ENCODE measurements at regions of chr11 and their contacts with region 1.

Region 1: GRCh38 chr11:86608251-86608799 is 64.1 kb downstream of the ME3 start:
- DNase-seq: peak; percentile 88
- H3K4me3 ChIP-seq: peak overlapping the region; percentile 36
- H3K27ac ChIP-seq: no peak overlapping the region
- H3K4me1 ChIP-seq: peaks cover 16% of the 10 kb centered on the region
- H3K27me3 ChIP-seq: no peaks in the 10 kb centered on the region

Region 2: DNA sequence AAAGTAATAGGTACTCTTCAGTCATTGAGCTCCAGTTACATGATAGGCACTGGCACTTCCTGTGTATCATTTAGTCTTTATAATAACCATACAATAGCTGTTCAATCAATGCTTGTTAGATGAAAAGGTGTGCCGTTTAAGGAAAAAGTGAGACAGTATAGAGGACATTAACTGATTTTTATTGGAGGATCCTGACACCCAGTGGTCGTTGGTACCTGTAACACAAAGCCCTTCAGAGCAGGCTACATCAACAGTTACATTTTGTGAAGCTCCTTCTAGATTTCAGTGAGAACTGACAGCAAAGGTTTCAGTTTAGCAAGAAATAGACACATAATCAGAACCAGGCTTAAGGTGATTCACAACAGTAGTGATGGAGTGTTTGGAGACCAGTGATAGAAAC is 189.4 kb before region 1 on chr11:
- in situ Hi-C with region 1: no loop called
- DNase-seq: peak; percentile 33
- H3K4me3 ChIP-seq: no peak overlapping the region
- H3K27ac ChIP-seq: no peak overlapping the region
- H3K4me1 ChIP-seq: no peaks in the 10 kb centered on the region; the same call in 1 of the 2 replicates
- H3K27me3 ChIP-seq: no peaks in the 10 kb centered on the region

Region 3: GRCh38 chr11:86818466-86819192 is 210.3 kb after region 1 on chr11:
- in situ Hi-C with region 1: loop called (anchors 10 kb)
- DNase-seq: peak; percentile 90
- H3K4me3 ChIP-seq: no peak overlapping the region
- H3K27ac ChIP-seq: peak overlapping the region; percentile 79
- H3K4me1 ChIP-seq: peaks cover 46% of the 10 kb centered on the region
- H3K27me3 ChIP-seq: no peaks in the 10 kb centered on the region

Region 4: GRCh38 chr11:87851234-87851633 is 1242.9 kb after region 1 on chr11:
- in situ Hi-C with region 1: no loop called
- DNase-seq: peak; percentile 38
- H3K4me3 ChIP-seq: no peak overlapping the region
- H3K27ac ChIP-seq: no peak overlapping the region
- H3K4me1 ChIP-seq: no peaks in the 10 kb centered on the region
- H3K27me3 ChIP-seq: no peaks in the 10 kb centered on the region